ENCODE measurements at regions of chr10 and their contacts with region 1.

Region 1: GRCh38 chr10:33134011-33134751 is 176.2 kb upstream of the ITGB1 start:
- DNase-seq: peak; percentile 100
- ATAC-seq: peak; percentile 95
- H3K4me3 ChIP-seq: no peak overlapping the region; the same call in 1 of the 2 replicates
- H3K27ac ChIP-seq: peak overlapping the region; percentile 65
- H3K4me1 ChIP-seq: peaks cover 41% of the 10 kb centered on the region
- H3K27me3 ChIP-seq: no peaks in the 10 kb centered on the region
- CTCF ChIP-seq: no peak

Region 2: GRCh38 chr10:33115738-33116719 is 18.2 kb before region 1 on chr10:
- CTCF ChIA-PET with region 1: no interaction called
- POLR2A ChIA-PET with region 1: no interaction called
- intact Hi-C with region 1: loop called (anchors 1 kb)
- DNase-seq: peak; percentile 85
- ATAC-seq: peak; percentile 84
- H3K4me3 ChIP-seq: no peak overlapping the region
- H3K27ac ChIP-seq: peak overlapping the region; percentile 59
- H3K4me1 ChIP-seq: peaks cover 39% of the 10 kb centered on the region
- H3K27me3 ChIP-seq: no peaks in the 10 kb centered on the region
- CTCF ChIP-seq: peak; percentile 95

Region 3: GRCh38 chr10:33193057-33193700 is 59.0 kb after region 1 on chr10:
- CTCF ChIA-PET with region 1: interaction called, 9 read pairs
- POLR2A ChIA-PET with region 1: interaction called, 5 read pairs
- intact Hi-C with region 1: loop called (anchors 1 kb)
- DNase-seq: peak; percentile 100
- ATAC-seq: peak; percentile 74
- H3K4me3 ChIP-seq: no peak overlapping the region
- H3K27ac ChIP-seq: peak overlapping the region; percentile 72
- H3K4me1 ChIP-seq: peaks cover 54% of the 10 kb centered on the region
- H3K27me3 ChIP-seq: no peaks in the 10 kb centered on the region
- CTCF ChIP-seq: no peak

Region 4: DNA sequence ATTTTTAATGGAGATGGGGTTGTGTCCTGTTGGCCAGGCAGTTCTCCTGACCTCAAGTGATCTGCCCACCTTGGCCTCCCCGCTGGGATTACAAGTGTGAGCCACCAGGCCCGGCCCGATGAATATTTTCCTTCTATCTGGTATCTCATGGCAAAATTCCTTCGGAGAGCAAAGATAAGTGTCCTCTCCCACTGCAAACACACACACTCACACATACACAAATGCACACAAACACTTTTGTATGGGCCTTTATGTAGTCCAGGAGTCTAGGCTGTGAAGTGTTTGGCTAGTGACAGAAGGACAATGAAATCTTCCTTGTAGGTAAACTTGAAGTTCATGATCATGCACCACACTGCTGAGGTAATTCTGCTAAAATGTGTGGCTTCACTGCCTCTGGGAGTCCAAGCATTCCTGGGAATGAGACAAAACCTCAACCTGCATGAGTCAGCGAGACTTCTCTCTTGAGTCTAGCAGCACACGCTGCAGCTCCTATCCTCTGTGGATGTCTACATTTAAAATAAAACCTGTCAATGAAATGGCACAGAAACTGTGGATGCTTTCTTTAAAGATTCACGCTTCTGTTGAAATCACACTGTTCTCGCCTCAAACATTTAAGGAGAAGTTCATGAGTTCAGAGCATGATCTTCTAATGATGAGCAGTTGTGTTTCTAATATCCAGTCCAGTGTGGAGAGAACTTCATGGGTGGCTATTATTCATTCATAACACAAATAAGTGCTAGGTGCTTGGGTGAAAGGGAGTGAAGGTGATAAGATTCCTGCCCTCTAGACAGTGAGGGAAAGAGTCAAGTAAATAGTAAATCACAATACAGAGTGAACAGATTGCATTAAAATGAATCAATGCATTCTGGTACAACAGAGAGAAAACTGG is 103.8 kb after region 1 on chr10:
- CTCF ChIA-PET with region 1: no interaction called
- POLR2A ChIA-PET with region 1: no interaction called
- intact Hi-C with region 1: loop called (anchors 1 kb)
- DNase-seq: peak; percentile 100
- ATAC-seq: peak; percentile 94
- H3K4me3 ChIP-seq: peak overlapping the region; percentile 2; the same call in 1 of the 2 replicates
- H3K27ac ChIP-seq: peak overlapping the region; percentile 66
- H3K4me1 ChIP-seq: peaks cover 61% of the 10 kb centered on the region
- H3K27me3 ChIP-seq: no peaks in the 10 kb centered on the region
- CTCF ChIP-seq: no peak

Region 5: GRCh38 chr10:34139559-34139958 is 1005.4 kb after region 1 on chr10:
- CTCF ChIA-PET with region 1: no interaction called
- POLR2A ChIA-PET with region 1: interaction called, 11 read pairs
- intact Hi-C with region 1: no loop called
- DNase-seq: peak; percentile 42
- ATAC-seq: no peak
- H3K4me3 ChIP-seq: no peak overlapping the region
- H3K27ac ChIP-seq: no peak overlapping the region
- H3K4me1 ChIP-seq: peaks cover 23% of the 10 kb centered on the region
- H3K27me3 ChIP-seq: no peaks in the 10 kb centered on the region
- CTCF ChIP-seq: no peak